MCF 10A (cell line): ENCODE measurements at regions of chr12 and their contacts with region 1.

Region 1: DNA sequence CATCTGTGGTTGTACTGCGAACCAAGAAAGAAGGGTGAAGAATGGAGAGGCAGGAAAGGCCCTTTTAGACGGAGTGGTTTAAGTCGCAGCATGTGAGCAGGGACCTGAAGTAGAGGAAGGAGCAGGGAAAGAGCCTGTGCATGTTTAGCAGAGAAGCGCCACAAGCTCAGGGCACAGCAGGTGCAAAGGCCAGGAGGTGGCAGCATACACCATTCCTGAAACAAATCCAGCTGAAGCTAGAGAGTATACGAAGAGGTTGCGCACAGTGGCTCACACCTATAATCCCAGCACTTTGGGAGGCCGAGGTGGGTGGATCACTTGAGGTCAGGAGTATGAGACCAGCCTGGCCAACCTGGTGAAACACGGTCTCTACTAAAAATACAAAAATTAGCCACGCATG is 49.9 kb downstream of the HELB start:
- DNase-seq: peak; percentile 41
- H3K4me3 Mint-ChIP-seq: no peak overlapping the region
- H3K27ac Mint-ChIP-seq: no peak overlapping the region
- H3K4me1 Mint-ChIP-seq: no peaks in the 10 kb centered on the region
- H3K27me3 Mint-ChIP-seq: no peaks in the 10 kb centered on the region
- CTCF ChIP-seq: peak; percentile 35

Region 2: GRCh38 chr12:65823513-65824375 is 528.5 kb before region 1 on chr12:
- CTCF ChIA-PET with region 1: no interaction called
- POLR2A ChIA-PET with region 1: no interaction called
- intact Hi-C with region 1: no loop called
- DNase-seq: peak; percentile 85
- H3K4me3 Mint-ChIP-seq: peak overlapping the region; percentile 94
- H3K27ac Mint-ChIP-seq: peak overlapping the region; percentile 90
- H3K4me1 Mint-ChIP-seq: peaks cover 35% of the 10 kb centered on the region
- H3K27me3 Mint-ChIP-seq: no peaks in the 10 kb centered on the region
- CTCF ChIP-seq: no peak

Region 3: GRCh38 chr12:66482351-66483203 is 130.4 kb after region 1 on chr12:
- CTCF ChIA-PET with region 1: no interaction called
- POLR2A ChIA-PET with region 1: no interaction called
- intact Hi-C with region 1: no loop called
- DNase-seq: no peak
- H3K4me3 Mint-ChIP-seq: no peak overlapping the region
- H3K27ac Mint-ChIP-seq: no peak overlapping the region
- H3K4me1 Mint-ChIP-seq: no peaks in the 10 kb centered on the region
- H3K27me3 Mint-ChIP-seq: peaks cover 1% of the 10 kb centered on the region
- CTCF ChIP-seq: no peak

Region 4: GRCh38 chr12:66708704-66709456 is 356.7 kb after region 1 on chr12:
- CTCF ChIA-PET with region 1: interaction called, 5 read pairs
- POLR2A ChIA-PET with region 1: no interaction called
- intact Hi-C with region 1: loop called (anchors 5 kb)
- DNase-seq: peak; percentile 16
- H3K4me3 Mint-ChIP-seq: no peak overlapping the region
- H3K27ac Mint-ChIP-seq: no peak overlapping the region
- H3K4me1 Mint-ChIP-seq: no peaks in the 10 kb centered on the region
- H3K27me3 Mint-ChIP-seq: peaks cover 41% of the 10 kb centered on the region
- CTCF ChIP-seq: peak; percentile 34